Activated naive CD4-positive, alpha-beta T cell treated with anti-CD3 and anti-CD28 coated beads, Interleukin-2, amount 10 ng/mL, durations not matched to agents 7 days and 5 days (primary cell): ENCODE measurements at regions of chr11 and their contacts with region 1.

Region 1: DNA sequence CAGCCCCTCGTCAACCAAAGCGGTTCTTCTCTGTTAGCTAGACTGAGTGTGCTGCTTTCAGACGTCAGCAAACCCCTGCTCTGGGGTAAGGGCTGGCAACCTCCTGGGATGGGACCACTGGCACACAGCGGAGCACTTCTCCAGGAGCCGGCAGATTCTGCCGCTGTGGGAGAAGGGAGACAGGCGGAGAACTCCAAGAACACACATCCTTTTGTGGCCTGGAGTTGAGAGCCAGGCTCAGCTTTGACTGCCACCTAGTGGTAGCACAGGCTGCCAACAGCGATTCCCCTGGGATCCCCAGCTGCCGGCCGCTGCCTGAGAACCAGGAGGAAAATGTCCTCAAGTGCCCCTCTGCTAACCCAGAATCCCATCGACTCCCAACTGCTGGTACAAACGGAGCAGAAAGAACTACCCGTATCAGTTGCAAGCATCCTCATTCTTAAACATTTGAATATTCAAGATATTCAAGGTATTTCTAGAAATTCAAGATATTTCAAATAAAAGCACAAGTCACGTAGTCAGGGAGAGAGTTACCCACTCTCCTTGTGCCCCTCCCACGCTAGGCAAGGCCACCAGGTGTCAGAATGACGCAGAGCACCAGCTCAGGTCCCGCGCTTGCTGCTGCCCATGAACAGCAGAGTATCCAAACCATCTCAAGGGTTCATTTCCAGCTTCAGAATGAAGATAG is 4.9 kb downstream of the LTO1 start:
- DNase-seq: peak; percentile 69
- H3K4me3 Mint-ChIP-seq: no peak overlapping the region
- H3K27ac Mint-ChIP-seq: no peak overlapping the region
- H3K4me1 Mint-ChIP-seq: peaks cover 28% of the 10 kb centered on the region
- H3K27me3 Mint-ChIP-seq: peaks cover 2% of the 10 kb centered on the region

Region 2: GRCh38 chr11:69609351-69609750 is 61.0 kb before region 1 on chr11:
- CTCF ChIA-PET with region 1: no interaction called
- DNase-seq: no peak
- H3K4me3 Mint-ChIP-seq: no peak overlapping the region
- H3K27ac Mint-ChIP-seq: no peak overlapping the region
- H3K4me1 Mint-ChIP-seq: no peaks in the 10 kb centered on the region
- H3K27me3 Mint-ChIP-seq: peaks cover 22% of the 10 kb centered on the region

Region 3: GRCh38 chr11:69657911-69658625 is 12.2 kb before region 1 on chr11:
- CTCF ChIA-PET with region 1: interaction called, 17 read pairs
- DNase-seq: no peak
- H3K4me3 Mint-ChIP-seq: no peak overlapping the region
- H3K27ac Mint-ChIP-seq: no peak overlapping the region
- H3K4me1 Mint-ChIP-seq: no peaks in the 10 kb centered on the region
- H3K27me3 Mint-ChIP-seq: no peaks in the 10 kb centered on the region

Region 4: GRCh38 chr11:69691449-69691848 is 21.1 kb after region 1 on chr11:
- CTCF ChIA-PET with region 1: no interaction called
- DNase-seq: no peak
- H3K4me3 Mint-ChIP-seq: no peak overlapping the region
- H3K27ac Mint-ChIP-seq: no peak overlapping the region
- H3K4me1 Mint-ChIP-seq: peaks cover 3% of the 10 kb centered on the region
- H3K27me3 Mint-ChIP-seq: peaks cover 55% of the 10 kb centered on the region